Vagina (tissue), 2 donors: ENCODE measurements at regions of chr5 and their contacts with region 1.

Region 1: GRCh38 chr5:58886315-58887207 is 303.7 kb downstream of the RAB3C start:
- DNase-seq: no peak
- H3K4me3 ChIP-seq: no peak overlapping the region
- H3K27ac ChIP-seq: no peak overlapping the region
- H3K4me1 ChIP-seq: peaks cover 10% of the 10 kb centered on the region
- H3K27me3 ChIP-seq: no peaks in the 10 kb centered on the region
- CTCF ChIP-seq: peak; percentile 81 to 85 (median 81)
- POLR2A ChIP-seq: no peak

Region 2: DNA sequence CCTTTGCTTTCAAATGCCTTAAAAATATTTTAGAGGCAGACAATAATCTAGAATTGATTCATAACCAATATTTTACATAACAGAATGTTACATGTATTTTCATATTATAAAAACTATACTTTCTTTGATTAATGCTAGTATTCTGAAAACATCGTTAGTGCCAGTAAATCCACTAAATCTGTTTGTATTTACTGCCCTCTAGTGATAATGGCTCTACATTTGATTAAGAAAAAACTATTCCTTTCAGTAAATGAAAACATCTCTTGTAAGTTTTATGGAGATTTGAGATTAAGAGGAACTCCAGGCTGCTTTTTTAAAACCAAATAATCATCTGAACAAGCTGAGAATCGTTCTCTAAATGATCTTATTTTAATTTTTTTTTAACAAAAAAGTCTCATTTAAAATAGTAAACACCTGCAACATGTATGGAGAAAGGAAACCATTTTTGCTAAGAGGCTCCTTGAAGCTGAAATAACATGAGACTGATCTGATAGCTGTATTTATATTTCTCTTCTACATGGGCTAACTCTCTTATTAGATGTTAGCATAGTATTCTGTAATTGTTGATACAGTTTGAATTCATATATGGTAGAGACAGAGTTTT is 121.0 kb after region 1 on chr5:
- intact Hi-C with region 1: loop called (anchors 2 kb)
- DNase-seq: no peak
- H3K4me3 ChIP-seq: no peak overlapping the region
- H3K27ac ChIP-seq: no peak overlapping the region
- H3K4me1 ChIP-seq: peaks cover under 1% of the 10 kb centered on the region
- H3K27me3 ChIP-seq: no peaks in the 10 kb centered on the region
- CTCF ChIP-seq: peak in 2 of 3 experiments; percentile 20 to 40
- POLR2A ChIP-seq: no peak

Region 3: GRCh38 chr5:59174248-59174844 is 287.8 kb after region 1 on chr5:
- intact Hi-C with region 1: loop called (anchors 10 kb)
- DNase-seq: no peak
- H3K4me3 ChIP-seq: no peak overlapping the region
- H3K27ac ChIP-seq: no peak overlapping the region
- H3K4me1 ChIP-seq: no peaks in the 10 kb centered on the region
- H3K27me3 ChIP-seq: no peaks in the 10 kb centered on the region
- CTCF ChIP-seq: peak; percentile 63 to 70 (median 63)
- POLR2A ChIP-seq: no peak

Region 4: GRCh38 chr5:59393585-59394420 is 507.2 kb after region 1 on chr5:
- intact Hi-C with region 1: no loop called
- DNase-seq: no peak
- H3K4me3 ChIP-seq: no peak overlapping the region
- H3K27ac ChIP-seq: no peak overlapping the region
- H3K4me1 ChIP-seq: no peaks in the 10 kb centered on the region
- H3K27me3 ChIP-seq: no peaks in the 10 kb centered on the region
- CTCF ChIP-seq: no peak
- POLR2A ChIP-seq: no peak